SK-N-SH (cell line): ENCODE measurements at regions of chr1 and their contacts with region 1.

Region 1: DNA sequence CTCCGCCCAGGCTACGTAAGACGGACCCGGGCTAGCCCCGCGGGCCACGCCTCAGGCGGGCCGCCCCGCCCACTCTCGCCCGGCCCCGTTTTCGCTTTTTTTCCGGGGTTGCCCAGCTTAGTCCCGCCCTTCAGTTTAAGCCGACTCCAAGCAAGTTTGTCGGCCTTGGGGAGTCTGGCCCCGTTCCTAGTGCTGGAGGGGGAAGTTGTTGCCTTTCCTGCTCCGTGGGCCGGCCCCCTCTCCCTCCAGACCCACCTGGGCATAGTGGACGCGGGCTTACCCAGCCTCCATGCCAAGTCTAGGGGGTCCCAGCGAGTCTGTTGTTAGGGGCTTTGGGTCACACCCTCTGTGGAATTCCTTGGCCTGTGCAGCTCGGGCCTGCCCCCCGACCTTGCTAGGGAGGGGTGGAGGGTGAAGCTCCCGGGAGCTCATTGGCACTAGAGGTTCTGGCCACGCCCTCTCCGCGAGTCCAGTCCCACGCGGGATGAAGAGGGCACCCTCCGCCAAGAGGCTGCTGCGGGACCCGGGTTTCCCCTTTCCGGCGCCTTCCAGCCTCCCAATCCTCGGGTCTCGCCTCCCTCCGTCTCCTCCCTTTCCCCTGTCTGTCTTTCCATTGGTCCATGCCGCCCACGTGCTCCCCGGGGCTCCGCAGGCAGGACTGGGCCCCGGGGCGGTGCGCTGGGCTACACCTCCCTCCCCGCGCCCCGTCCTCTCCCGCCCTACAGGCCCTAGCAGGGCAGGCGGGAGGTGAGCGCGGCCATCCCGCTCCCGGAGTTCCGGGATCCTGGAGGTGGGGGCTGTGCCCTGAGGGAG is 3.3 kb downstream of the RUSC1 start:
- DNase-seq: peak; percentile 95
- H3K4me3 ChIP-seq: peak overlapping the region; percentile 84 to 95
- H3K27ac ChIP-seq: peak overlapping the region; percentile 95
- H3K4me1 ChIP-seq: peaks cover 12 to 37% of the 10 kb centered on the region in 2 experiments
- H3K27me3 ChIP-seq: no peaks in the 10 kb centered on the region
- CTCF ChIP-seq: no peak
- EP300 ChIP-seq: no peak
- RAD21 ChIP-seq: no peak

Region 2: DNA sequence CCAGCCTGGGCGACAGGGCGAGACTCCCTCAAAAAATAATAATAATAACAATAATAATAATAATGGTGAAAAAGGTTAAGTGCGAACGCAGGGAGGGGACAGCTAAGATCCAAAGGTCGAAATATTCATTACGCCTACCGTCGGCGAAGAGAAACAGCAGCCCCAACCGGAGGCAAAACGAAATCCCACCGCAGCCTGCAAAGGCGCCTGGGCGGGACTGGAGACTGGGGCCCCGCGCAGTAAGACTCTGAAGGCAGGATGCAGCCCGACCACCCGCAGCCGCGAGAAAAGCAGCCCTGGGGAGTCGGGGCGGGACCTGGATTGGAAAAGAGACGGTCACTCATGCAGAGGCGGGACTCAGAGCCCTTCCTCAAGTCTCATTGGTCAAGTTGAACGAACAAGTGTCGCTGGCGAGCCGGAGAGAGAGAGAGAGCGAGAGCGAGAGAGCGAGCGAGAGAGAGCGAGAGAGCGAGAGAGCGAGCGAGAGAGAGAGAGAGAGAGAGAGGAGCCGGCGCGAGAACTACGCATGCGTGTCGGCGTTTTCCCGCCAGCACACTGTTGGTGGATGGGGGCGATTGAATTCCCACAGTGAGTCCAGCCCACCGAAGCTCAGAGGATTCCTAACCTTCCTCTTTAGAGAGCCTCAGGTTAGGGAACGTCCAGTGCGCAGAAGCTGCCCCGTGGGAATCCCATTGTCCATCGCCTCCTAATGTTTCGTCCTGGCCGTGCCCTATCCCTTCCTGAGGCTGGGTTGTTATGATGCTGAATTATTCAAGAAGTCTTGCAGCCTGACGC is 79.4 kb before region 1 on chr1:
- CTCF ChIA-PET with region 1: interaction called, 184 read pairs
- POLR2A ChIA-PET with region 1: no interaction called
- DNase-seq: peak; percentile 91
- H3K4me3 ChIP-seq: peak overlapping the region; percentile 49 to 65
- H3K27ac ChIP-seq: peak overlapping the region; percentile 75 to 92
- H3K4me1 ChIP-seq: peaks cover 0 to 24% of the 10 kb centered on the region in 2 experiments; a peak in 3 of 4 replicates
- H3K27me3 ChIP-seq: no peaks in the 10 kb centered on the region
- CTCF ChIP-seq: peak; percentile 56
- EP300 ChIP-seq: peak; percentile 67 to 77; a peak in 3 of 4 replicates
- RAD21 ChIP-seq: peak; percentile 49

Region 3: GRCh38 chr1:155277070-155277895 is 46.7 kb before region 1 on chr1 and contains the start of gene HCN3:
- CTCF ChIA-PET with region 1: interaction called, 27 read pairs
- POLR2A ChIA-PET with region 1: interaction called, 5 read pairs
- DNase-seq: peak; percentile 98
- H3K4me3 ChIP-seq: peak within 1 kb of the TSS; percentile 71 to 78
- H3K27ac ChIP-seq: peak within 1 kb of the TSS; percentile 25 to 66; a peak in 3 of 4 replicates
- H3K4me1 ChIP-seq: peaks cover 5 to 22% of the 10 kb centered on the region in 2 experiments; a peak in 2 of 4 replicates
- H3K27me3 ChIP-seq: no peaks in the 10 kb centered on the region
- CTCF ChIP-seq: peak; percentile 70
- EP300 ChIP-seq: no peak
- RAD21 ChIP-seq: peak; percentile 46
- polyA plus RNA-seq, gene HCN3: 9.7 and 10.1 TPM in 2 replicates

Region 4: GRCh38 chr1:155339515-155340097 is 15.6 kb after region 1 on chr1:
- CTCF ChIA-PET with region 1: interaction called, 19 read pairs
- POLR2A ChIA-PET with region 1: no interaction called
- DNase-seq: no peak
- H3K4me3 ChIP-seq: no peak overlapping the region
- H3K27ac ChIP-seq: no peak overlapping the region
- H3K4me1 ChIP-seq: no peaks in the 10 kb centered on the region
- H3K27me3 ChIP-seq: no peaks in the 10 kb centered on the region
- CTCF ChIP-seq: no peak
- EP300 ChIP-seq: no peak
- RAD21 ChIP-seq: no peak